ENCODE measurements at regions of chr1 and their contacts with region 1.

Region 1: GRCh38 chr1:58546520-58547308 is at the start of gene OMA1:
- DNase-seq: peak; percentile 93 to 99 (median 98)
- ATAC-seq: peak; percentile 89
- H3K4me3 ChIP-seq: peak within 1 kb of the TSS; percentile 82
- H3K4me3 Mint-ChIP-seq: peak within 1 kb of the TSS; percentile 97
- H3K27ac ChIP-seq: peak within 1 kb of the TSS; percentile 96 to 97
- H3K27ac Mint-ChIP-seq: peak within 1 kb of the TSS; percentile 97
- H3K4me1 ChIP-seq: peaks cover 15% of the 10 kb centered on the region
- H3K4me1 Mint-ChIP-seq: peaks cover 35% of the 10 kb centered on the region
- H3K27me3 ChIP-seq: peaks cover 0 to under 1% of the 10 kb centered on the region in 2 experiments
- H3K27me3 Mint-ChIP-seq: peaks cover 6% of the 10 kb centered on the region
- CTCF ChIP-seq: peak; percentile 93
- total RNA-seq, gene OMA1: 23.7 to 27.7 TPM

Region 2: DNA sequence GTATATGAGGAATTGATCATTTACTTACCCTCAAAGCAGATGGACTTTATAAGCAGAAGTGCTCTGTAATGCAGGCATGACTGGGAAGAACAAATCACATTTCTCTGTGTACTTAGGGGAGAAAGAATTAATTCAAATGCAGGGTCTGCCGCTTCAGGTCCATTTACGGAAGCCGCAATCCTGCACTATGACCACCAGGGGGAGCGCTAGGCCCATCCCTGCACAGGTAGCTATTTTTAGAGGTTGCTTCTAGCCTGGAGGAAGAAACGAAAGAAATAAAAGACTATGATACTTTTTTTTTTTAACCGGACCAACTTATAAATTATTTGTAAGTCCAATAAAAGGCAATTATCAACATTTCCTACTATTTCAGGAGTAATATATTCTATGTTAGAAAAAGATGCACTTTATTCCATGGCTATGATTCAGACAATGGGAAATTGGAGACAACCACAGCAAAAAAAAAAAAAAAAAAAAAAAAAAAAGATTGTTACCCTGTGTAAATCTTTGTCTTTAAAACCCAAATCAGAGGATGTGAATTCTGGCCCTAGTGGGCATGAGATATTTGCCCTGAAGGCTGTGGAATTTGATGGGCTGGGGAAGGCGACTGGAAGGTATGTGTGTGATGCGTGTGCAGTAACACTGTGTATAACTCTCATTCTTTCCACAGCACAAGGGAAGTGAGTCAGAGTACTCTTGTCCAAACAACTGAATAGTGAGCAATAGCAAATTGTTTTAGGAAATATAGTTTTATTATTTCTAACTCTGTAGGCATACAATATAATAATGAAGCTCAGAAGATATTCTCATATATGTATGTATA is 1714.6 kb before region 1 on chr1:
- CTCF ChIA-PET with region 1: interaction called, 7 read pairs
- POLR2A ChIA-PET with region 1: no interaction called
- intact Hi-C with region 1: loop called (anchors 1 to 2 kb)
- DNase-seq: peak; percentile 41 to 82 (median 54)
- ATAC-seq: peak; percentile 62
- H3K4me3 ChIP-seq: no peak overlapping the region
- H3K4me3 Mint-ChIP-seq: no peak overlapping the region
- H3K27ac ChIP-seq: no peak overlapping the region
- H3K27ac Mint-ChIP-seq: no peak overlapping the region
- H3K4me1 ChIP-seq: no peaks in the 10 kb centered on the region
- H3K4me1 Mint-ChIP-seq: peaks cover 8% of the 10 kb centered on the region
- H3K27me3 ChIP-seq: peaks cover 0 to 7% of the 10 kb centered on the region in 2 experiments
- H3K27me3 Mint-ChIP-seq: peaks cover 35% of the 10 kb centered on the region
- CTCF ChIP-seq: peak; percentile 98

Region 3: DNA sequence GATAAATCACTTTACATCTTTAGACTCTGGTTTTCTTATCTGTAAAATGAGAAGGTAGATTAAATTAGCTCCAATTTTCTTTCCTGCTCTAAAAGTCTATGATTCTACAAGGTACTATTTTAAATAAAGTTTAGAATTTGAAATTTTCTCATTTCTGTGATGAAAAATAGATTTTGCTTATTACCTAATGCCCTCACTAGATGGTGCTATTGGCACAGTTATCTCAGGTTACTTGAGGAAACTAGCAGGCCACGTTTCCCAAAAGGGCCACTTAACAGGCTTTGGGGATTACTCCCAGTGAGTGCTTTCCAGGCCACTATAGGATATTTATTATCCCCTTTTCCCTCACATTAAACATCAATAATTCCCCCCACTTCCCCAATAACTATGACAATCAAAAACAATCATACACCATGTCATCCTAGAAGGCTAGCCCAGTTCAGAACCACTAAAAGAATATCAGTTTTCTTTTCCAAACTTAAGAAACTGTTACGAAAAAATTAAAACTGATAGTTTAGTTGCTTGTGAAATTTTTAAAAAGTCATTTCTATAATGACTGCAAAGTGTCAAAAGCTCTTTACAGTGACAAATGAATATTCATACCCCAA is 30.8 kb before region 1 on chr1:
- CTCF ChIA-PET with region 1: interaction called, 84 read pairs
- POLR2A ChIA-PET with region 1: interaction called, 29 read pairs
- intact Hi-C with region 1: loop called (anchors 1 kb)
- DNase-seq: peak in 8 of 14 experiments; percentile 1 to 81 (median 25)
- ATAC-seq: peak; percentile 54
- H3K4me3 ChIP-seq: no peak overlapping the region
- H3K4me3 Mint-ChIP-seq: no peak overlapping the region
- H3K27ac ChIP-seq: no peak overlapping the region
- H3K27ac Mint-ChIP-seq: peak overlapping the region; percentile 25
- H3K4me1 ChIP-seq: no peaks in the 10 kb centered on the region
- H3K4me1 Mint-ChIP-seq: peaks cover 9% of the 10 kb centered on the region
- H3K27me3 ChIP-seq: no peaks in the 10 kb centered on the region
- H3K27me3 Mint-ChIP-seq: no peaks in the 10 kb centered on the region
- CTCF ChIP-seq: peak; percentile 83

Region 4: DNA sequence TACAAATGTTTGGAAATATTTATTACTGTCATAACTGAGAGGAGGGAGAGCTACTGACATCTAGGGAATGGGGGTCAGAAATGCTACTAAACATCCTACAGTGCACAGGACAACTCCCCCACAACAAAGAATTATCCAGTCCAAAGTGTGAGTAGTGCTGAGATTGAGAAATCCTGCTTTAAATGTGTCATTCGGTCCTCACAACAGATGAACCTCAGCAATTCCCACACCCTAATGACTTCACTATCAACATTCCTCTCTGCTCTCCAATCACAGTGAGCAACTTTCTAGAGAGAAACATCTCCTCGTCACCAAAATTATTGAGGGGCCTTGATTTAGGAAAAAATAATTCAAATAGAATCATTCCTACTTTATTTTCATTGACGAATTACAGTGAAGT is 18.2 kb before region 1 on chr1:
- CTCF ChIA-PET with region 1: interaction called, 8 read pairs
- POLR2A ChIA-PET with region 1: interaction called, 11 read pairs
- intact Hi-C with region 1: no loop called
- DNase-seq: no peak
- ATAC-seq: no peak
- H3K4me3 ChIP-seq: no peak overlapping the region
- H3K4me3 Mint-ChIP-seq: no peak overlapping the region
- H3K27ac ChIP-seq: no peak overlapping the region
- H3K27ac Mint-ChIP-seq: no peak overlapping the region
- H3K4me1 ChIP-seq: no peaks in the 10 kb centered on the region
- H3K4me1 Mint-ChIP-seq: peaks cover 12% of the 10 kb centered on the region
- H3K27me3 ChIP-seq: no peaks in the 10 kb centered on the region
- H3K27me3 Mint-ChIP-seq: no peaks in the 10 kb centered on the region
- CTCF ChIP-seq: no peak

Region 5: DNA sequence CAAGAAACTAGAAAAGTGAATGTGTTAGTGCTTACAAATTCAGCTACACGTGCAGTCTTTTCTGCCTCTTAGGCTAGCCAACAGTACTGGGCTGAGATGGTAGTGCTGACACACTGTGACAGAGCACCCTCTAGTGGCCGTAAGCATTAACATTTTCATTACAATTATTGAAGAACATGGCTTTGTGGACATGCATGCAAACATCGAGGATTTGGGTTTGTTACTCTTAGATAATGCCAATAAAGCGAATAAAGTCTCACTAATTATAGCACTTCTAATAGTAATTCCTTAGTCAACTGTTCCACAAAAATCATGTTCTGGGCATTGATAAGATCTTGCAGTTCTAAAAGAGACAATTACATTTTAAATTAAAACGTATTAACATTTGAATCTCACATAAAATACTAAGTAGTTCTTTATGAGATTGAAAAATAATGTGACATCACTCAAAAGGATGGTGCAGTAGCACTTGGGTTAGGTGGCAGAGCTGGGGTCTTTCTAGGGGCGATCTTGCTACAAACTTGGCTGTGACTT is 106.0 kb after region 1 on chr1:
- CTCF ChIA-PET with region 1: interaction called, 10 read pairs
- POLR2A ChIA-PET with region 1: no interaction called
- intact Hi-C with region 1: loop called (anchors 1 to 10 kb)
- DNase-seq: peak; percentile 16 to 86 (median 42)
- ATAC-seq: peak; percentile 92
- H3K4me3 ChIP-seq: no peak overlapping the region
- H3K4me3 Mint-ChIP-seq: no peak overlapping the region
- H3K27ac ChIP-seq: no peak overlapping the region
- H3K27ac Mint-ChIP-seq: no peak overlapping the region
- H3K4me1 ChIP-seq: peaks cover 11% of the 10 kb centered on the region
- H3K4me1 Mint-ChIP-seq: peaks cover 23% of the 10 kb centered on the region
- H3K27me3 ChIP-seq: no peaks in the 10 kb centered on the region
- H3K27me3 Mint-ChIP-seq: no peaks in the 10 kb centered on the region
- CTCF ChIP-seq: peak; percentile 96

Region 6: DNA sequence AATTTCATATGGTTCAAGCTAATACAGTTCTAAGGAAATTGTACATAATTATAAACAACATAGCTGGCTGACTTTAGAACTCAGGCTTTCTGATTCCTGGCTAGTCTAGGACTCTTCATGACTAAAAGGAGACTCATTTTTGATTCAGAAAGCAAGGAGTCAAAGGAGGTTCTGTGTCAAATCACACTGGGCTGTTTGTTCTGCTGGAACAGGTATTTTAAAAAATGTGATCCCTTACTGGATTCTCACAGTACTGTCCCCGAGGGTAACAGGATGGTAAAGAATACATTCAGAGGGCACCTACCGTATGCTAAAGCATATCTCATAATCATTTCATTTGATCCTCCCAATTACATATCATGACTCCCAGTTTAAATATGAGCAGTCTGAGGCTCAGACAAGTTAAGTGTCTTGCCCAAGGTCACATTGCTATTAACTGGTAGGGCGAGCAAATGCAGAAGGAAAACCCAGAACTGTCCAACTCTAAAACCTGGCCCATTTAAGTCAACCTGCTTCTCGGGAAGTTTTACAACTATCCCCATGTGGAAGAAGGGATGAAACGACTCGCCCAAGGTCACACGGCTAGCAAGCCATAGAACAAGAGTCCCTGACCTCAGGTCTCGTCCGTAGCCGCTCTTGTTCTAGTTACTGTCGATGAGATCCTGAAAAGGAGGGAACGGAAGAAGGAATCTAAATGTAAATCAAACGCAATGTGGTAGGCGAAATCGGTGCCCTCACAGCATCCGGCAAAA is 152.5 kb after region 1 on chr1:
- CTCF ChIA-PET with region 1: interaction called, 4 read pairs
- POLR2A ChIA-PET with region 1: interaction called, 6 read pairs
- intact Hi-C with region 1: loop called in 1 of 2 experiments (anchors 5 kb)
- DNase-seq: no peak
- ATAC-seq: no peak
- H3K4me3 ChIP-seq: peak overlapping the region; percentile 89
- H3K4me3 Mint-ChIP-seq: peak overlapping the region; percentile 98
- H3K27ac ChIP-seq: peak overlapping the region; percentile 66 to 82
- H3K27ac Mint-ChIP-seq: peak overlapping the region; percentile 97
- H3K4me1 ChIP-seq: peaks cover 21% of the 10 kb centered on the region
- H3K4me1 Mint-ChIP-seq: peaks cover 4% of the 10 kb centered on the region
- H3K27me3 ChIP-seq: no peaks in the 10 kb centered on the region
- H3K27me3 Mint-ChIP-seq: no peaks in the 10 kb centered on the region
- CTCF ChIP-seq: no peak

Region 7: DNA sequence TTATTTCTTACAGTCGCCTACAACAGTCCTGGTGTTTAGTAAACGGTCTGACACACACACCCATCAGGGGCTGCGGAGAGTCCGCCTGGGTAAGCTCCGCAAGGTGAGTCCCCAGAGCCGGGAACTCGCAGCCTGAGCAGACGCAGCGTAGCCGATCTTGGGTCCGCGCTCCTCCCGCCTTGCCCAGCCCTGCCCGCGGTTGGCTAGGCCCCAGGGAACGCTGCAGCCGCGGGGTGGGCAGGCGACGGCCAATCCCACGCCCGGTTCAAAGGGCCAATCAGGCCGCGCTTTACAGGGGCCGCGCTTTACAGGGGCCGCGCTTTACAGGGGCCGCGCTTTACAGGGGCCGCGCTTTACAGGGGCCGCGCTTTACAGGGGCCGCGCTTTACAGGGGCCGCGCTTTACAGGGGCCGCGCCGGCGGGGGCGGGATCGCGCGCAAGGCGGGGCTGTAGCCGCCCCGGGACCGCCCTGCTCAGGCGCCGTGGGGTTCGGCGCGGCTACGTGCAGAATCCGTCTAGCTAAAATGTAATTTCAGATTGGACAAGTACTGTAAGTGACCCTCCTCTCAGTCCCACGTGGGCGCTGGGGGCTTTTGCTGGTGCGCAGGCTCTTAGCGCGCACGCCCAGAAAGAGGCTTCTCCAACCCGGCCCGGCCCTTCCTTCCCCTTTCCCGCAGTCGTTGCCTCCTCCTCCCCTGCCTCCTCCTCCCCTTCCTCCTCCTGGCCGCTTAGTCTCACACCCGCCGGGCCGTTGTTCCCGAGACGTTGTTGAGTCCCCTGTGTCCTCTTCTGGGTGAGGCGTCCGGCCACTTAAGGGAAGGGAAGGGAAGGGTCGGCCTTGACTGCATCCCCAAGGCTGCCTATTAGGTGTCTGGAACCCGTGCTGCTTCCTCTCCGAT is 749.9 kb after region 1 on chr1 and contains the start of gene FGGY:
- CTCF ChIA-PET with region 1: no interaction called
- POLR2A ChIA-PET with region 1: no interaction called
- intact Hi-C with region 1: loop called in 1 of 2 experiments (anchors 10 kb)
- DNase-seq: peak; percentile 60 to 94 (median 77)
- ATAC-seq: peak; percentile 91
- H3K4me3 ChIP-seq: peak within 1 kb of the TSS; percentile 80
- H3K4me3 Mint-ChIP-seq: peak within 1 kb of the TSS; percentile 88
- H3K27ac ChIP-seq: peak within 1 kb of the TSS; percentile 74 to 76
- H3K27ac Mint-ChIP-seq: peak within 1 kb of the TSS; percentile 85
- H3K4me1 ChIP-seq: peaks cover 10% of the 10 kb centered on the region
- H3K4me1 Mint-ChIP-seq: peaks cover 16% of the 10 kb centered on the region
- H3K27me3 ChIP-seq: no peaks in the 10 kb centered on the region
- H3K27me3 Mint-ChIP-seq: no peaks in the 10 kb centered on the region
- CTCF ChIP-seq: no peak
- total RNA-seq, gene FGGY: 9.5 to 10.0 TPM

Measured in CD4-positive, alpha-beta T cell (primary cell).